ENCODE measurements at regions of chr10 and their contacts with region 1.

Region 1: GRCh38 chr10:84147347-84147746 is 8.0 kb downstream of the GHITM start:
- DNase-seq: no peak
- ATAC-seq: no peak
- H3K4me3 ChIP-seq: no peak overlapping the region
- H3K4me3 Mint-ChIP-seq: no peak overlapping the region
- H3K27ac ChIP-seq: peak overlapping the region; percentile 40
- H3K27ac Mint-ChIP-seq: peak overlapping the region in 4 of 9 donors; percentile 2 to 63 (median 52)
- H3K4me1 ChIP-seq: no peaks in the 10 kb centered on the region
- H3K4me1 Mint-ChIP-seq: peaks cover 0 to 36% (median 26%) of the 10 kb centered on the region in 7 donors
- H3K27me3 ChIP-seq: no peaks in the 10 kb centered on the region
- H3K27me3 Mint-ChIP-seq: no peaks in the 10 kb centered on the region

Region 2: GRCh38 chr10:83176901-83177300 is 970.4 kb before region 1 on chr10:
- CTCF ChIA-PET with region 1: no interaction called
- POLR2A ChIA-PET with region 1: no interaction called
- intact Hi-C with region 1: no loop called
- DNase-seq: no peak
- ATAC-seq: no peak
- H3K4me3 ChIP-seq: no peak overlapping the region
- H3K4me3 Mint-ChIP-seq: no peak overlapping the region
- H3K27ac ChIP-seq: no peak overlapping the region
- H3K27ac Mint-ChIP-seq: no peak overlapping the region
- H3K4me1 ChIP-seq: no peaks in the 10 kb centered on the region
- H3K4me1 Mint-ChIP-seq: no peaks in the 10 kb centered on the region
- H3K27me3 ChIP-seq: no peaks in the 10 kb centered on the region
- H3K27me3 Mint-ChIP-seq: no peaks in the 10 kb centered on the region

Region 3: DNA sequence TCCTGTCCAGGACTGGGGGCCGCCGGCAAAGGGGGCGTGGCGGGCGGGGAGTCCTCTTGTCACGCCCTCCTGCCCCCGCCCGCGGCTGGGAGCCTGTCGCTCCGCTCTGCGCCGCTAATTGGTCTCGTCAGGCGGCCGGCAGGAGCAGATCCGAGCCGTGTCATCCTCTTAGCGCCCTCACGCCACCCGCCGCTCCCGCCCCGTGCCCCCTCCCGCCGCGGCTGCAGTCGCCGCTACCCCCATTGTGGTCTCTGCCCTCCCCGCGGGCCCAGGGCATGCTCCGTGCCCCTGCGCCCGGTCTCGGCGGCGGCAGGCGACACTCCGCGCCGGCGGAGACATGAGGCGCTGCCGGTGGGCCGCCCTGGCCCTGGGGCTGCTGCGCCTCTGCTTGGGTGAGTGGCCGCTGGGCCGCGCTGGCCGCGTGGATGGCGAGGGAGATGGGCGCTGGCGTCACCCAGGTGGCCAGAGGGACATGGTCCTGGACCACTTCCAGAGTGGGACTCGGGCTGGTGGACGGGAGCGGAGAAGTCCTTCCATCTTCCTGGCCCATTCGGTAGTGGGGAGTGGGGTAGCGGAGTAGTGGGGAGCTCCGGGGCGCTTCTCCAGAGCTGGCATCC is 47.2 kb after region 1 on chr10 and contains the start of gene CDHR1:
- CTCF ChIA-PET with region 1: interaction called, 5 read pairs
- POLR2A ChIA-PET with region 1: no interaction called
- intact Hi-C with region 1: loop called in 1 of 2 experiments (anchors 5 kb)
- DNase-seq: peak in 7 of 9 donors; percentile 12 to 49 (median 37)
- ATAC-seq: peak; percentile 79
- H3K4me3 ChIP-seq: peak within 1 kb of the TSS; percentile 52
- H3K4me3 Mint-ChIP-seq: peak within 1 kb of the TSS; percentile 47 to 75 (median 65)
- H3K27ac ChIP-seq: no peak within 1 kb of the TSS
- H3K27ac Mint-ChIP-seq: peak within 1 kb of the TSS in 1 of 9 donors; percentile 28
- H3K4me1 ChIP-seq: peaks cover 18 to 24% of the 10 kb centered on the region in 2 donors
- H3K4me1 Mint-ChIP-seq: peaks cover 12 to 28% (median 16%) of the 10 kb centered on the region in 7 donors
- H3K27me3 ChIP-seq: peaks cover 0 to 3% of the 10 kb centered on the region in 2 donors
- H3K27me3 Mint-ChIP-seq: peaks cover 0 to 59% (median 22%) of the 10 kb centered on the region in 5 donors
- total RNA-seq, gene CDHR1: 0.15 to 1.6 (median 0.43) TPM in 4 of 5 experiments, not detected in the other

Region 4: DNA sequence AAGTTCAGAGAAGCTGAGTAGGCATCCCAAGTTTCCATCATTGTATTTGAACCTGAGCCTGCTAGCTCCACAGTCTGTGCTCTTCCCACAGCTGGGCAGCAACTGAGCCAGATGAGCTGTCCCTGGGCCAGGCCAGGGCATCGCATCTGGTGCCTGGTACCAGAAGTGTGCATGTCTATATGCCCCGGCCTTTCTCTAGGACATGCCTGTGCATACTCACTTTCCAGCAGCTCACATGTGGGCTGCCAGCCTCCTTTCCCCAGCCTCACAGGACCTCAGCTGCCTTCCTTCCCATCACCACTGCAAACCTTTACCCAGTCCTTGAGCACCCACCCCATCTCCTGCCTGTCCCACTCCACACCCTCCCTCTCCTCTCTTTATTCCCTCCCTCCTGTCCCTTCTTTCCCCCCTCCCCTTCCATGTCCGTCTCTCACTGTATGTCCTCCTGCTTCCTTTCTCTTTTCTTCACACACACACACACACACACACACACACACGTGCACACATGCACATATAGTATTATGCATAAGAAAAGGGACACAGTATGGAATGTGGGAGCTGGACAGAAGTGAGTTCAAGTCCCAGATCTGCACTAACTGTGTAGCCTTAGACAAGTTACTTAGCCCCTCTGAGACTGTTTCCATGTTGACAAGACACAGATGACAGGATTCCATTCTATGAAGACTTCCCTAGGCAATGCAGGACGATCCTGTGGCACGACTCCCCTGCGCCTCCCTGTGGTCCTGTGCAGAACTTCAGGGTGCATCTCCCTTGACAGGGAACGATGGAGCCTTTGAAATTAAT is 57.9 kb after region 1 on chr10:
- CTCF ChIA-PET with region 1: interaction called, 51 read pairs
- POLR2A ChIA-PET with region 1: interaction called, 4 read pairs
- intact Hi-C with region 1: loop called (anchors 1 kb)
- DNase-seq: peak; percentile 20 to 73 (median 52)
- ATAC-seq: peak; percentile 88
- H3K4me3 ChIP-seq: no peak overlapping the region
- H3K4me3 Mint-ChIP-seq: no peak overlapping the region
- H3K27ac ChIP-seq: no peak overlapping the region
- H3K27ac Mint-ChIP-seq: peak overlapping the region in 3 of 9 donors; percentile 8 to 76 (median 51)
- H3K4me1 ChIP-seq: no peaks in the 10 kb centered on the region
- H3K4me1 Mint-ChIP-seq: no peaks in the 10 kb centered on the region
- H3K27me3 ChIP-seq: no peaks in the 10 kb centered on the region
- H3K27me3 Mint-ChIP-seq: peaks cover 0 to 13% (median 8%) of the 10 kb centered on the region in 5 donors

Region 5: GRCh38 chr10:84214612-84215235 is 67.4 kb after region 1 on chr10:
- CTCF ChIA-PET with region 1: interaction called, 10 read pairs
- POLR2A ChIA-PET with region 1: no interaction called
- intact Hi-C with region 1: loop called (anchors 2 kb)
- DNase-seq: peak in 4 of 9 donors; percentile 23 to 37 (median 30)
- ATAC-seq: peak; percentile 81
- H3K4me3 ChIP-seq: no peak overlapping the region
- H3K4me3 Mint-ChIP-seq: peak overlapping the region in 4 of 10 donors; percentile 11 to 51 (median 50)
- H3K27ac ChIP-seq: no peak overlapping the region
- H3K27ac Mint-ChIP-seq: peak overlapping the region in 1 of 9 donors; percentile 11
- H3K4me1 ChIP-seq: no peaks in the 10 kb centered on the region
- H3K4me1 Mint-ChIP-seq: peaks cover 0 to 6% (median 0%) of the 10 kb centered on the region in 7 donors
- H3K27me3 ChIP-seq: no peaks in the 10 kb centered on the region
- H3K27me3 Mint-ChIP-seq: peaks cover 0 to 10% (median 4%) of the 10 kb centered on the region in 5 donors

Measured in naive thymus-derived CD4-positive, alpha-beta T cell (primary cell).